Naive thymus-derived CD4-positive, alpha-beta T cell (primary cell): ENCODE measurements at regions of chr20 and their contacts with region 1.

Region 1: DNA sequence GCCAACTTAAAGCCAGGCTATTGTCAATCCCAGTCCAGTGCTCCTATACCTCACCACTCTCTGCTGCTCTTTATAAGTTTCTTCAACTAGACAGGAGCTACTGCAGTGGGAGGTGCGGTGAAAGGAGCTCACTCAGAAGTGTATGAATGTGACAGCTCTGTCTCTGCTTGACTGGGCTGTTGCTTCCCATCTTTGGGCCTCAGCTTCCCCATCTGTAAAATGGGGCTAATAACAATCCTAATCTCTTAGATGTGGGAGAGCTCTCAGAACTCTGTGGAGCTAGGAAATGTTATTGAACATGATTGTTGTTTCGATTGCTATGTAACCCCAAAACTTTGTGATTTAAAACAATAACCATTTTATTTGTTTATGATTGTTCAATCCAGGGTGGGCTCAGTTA is 8.4 kb upstream of the RALY start:
- DNase-seq: no peak
- ATAC-seq: no peak
- H3K4me3 ChIP-seq: no peak overlapping the region
- H3K4me3 Mint-ChIP-seq: no peak overlapping the region
- H3K27ac ChIP-seq: no peak overlapping the region
- H3K27ac Mint-ChIP-seq: no peak overlapping the region
- H3K4me1 ChIP-seq: no peaks in the 10 kb centered on the region
- H3K4me1 Mint-ChIP-seq: peaks cover 0 to 13% (median 5%) of the 10 kb centered on the region in 7 donors
- H3K27me3 ChIP-seq: no peaks in the 10 kb centered on the region
- H3K27me3 Mint-ChIP-seq: peaks cover 0 to 6% (median 4%) of the 10 kb centered on the region in 5 donors

Region 2: DNA sequence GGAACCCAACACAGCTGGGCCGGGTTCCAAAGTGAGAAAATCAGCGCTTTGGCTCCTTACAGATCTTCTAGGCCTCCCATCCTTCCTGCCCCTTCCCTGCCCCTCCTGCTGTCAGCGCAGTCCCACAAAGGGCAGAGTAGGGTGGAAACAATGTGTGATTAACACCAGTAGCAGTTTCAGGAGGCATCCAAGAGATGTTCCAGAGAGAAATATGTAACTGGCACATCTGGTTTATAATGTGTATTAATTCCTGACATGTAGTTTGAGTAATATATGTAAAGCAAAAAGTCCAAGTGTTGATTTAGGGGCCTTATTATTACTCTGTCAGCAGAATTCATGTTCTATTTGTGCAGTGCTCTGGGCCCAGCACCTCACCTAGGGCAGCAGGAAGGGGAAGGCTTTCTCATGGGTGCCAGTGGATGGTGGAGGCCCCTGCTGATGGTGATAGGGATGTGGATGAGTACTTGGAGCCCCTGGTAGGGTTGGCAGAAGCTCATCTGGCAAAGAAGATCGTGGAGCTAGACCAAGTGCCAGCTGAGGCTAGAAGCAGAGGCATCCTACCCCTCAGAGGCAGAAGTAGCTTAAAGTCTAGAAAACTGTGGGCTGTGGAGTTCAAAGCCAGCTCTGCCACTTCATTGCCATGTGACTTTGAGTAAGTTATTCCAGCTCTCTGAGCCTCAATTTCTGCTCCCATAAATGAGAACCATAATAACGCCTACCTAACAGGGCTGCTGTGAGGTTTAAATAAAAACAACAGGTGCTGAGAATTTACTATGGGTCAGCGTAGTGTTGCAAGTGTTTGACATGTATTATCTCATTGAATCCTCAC is 13.9 kb before region 1 on chr20:
- CTCF ChIA-PET with region 1: interaction called, 4 read pairs
- POLR2A ChIA-PET with region 1: no interaction called
- intact Hi-C with region 1: loop called in 1 of 2 experiments (anchors 1 kb)
- DNase-seq: no peak
- ATAC-seq: no peak
- H3K4me3 ChIP-seq: no peak overlapping the region
- H3K4me3 Mint-ChIP-seq: no peak overlapping the region
- H3K27ac ChIP-seq: no peak overlapping the region
- H3K27ac Mint-ChIP-seq: peak overlapping the region in 2 of 9 donors; percentile 17 to 23
- H3K4me1 ChIP-seq: no peaks in the 10 kb centered on the region
- H3K4me1 Mint-ChIP-seq: peaks cover 0 to 5% (median 0%) of the 10 kb centered on the region in 7 donors
- H3K27me3 ChIP-seq: no peaks in the 10 kb centered on the region
- H3K27me3 Mint-ChIP-seq: peaks cover 0 to 2% (median 0%) of the 10 kb centered on the region in 5 donors

Region 3: DNA sequence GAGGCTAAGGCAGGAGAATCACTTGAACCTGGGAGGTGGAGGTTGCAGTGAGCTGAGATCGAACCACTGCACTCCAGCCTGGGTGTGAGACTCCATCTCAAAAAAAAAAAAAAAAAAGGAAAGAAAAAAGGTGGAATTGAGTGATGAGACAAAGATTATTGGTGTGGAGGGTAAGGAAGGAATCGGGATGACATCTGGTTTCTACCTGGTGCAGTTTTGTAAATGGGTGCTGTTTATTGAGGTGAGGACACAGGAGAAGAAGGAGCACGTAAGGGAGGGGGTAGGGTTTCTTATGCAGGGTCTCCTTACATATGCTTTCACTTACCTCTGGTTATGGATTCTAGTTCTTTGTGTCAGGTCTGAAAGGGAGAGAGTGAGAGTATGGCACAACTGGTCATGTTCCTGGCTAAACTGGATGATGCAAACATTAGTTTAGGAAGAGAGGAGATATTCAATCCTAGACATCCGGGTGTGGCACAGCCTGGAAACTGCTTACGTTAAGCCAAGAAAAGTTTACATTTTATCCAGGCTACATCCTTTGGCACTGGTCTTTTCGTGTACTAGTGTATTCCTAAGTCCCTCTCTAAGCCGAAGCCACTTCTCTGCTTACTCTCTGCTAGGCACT is 13.9 kb after region 1 on chr20:
- CTCF ChIA-PET with region 1: no interaction called
- POLR2A ChIA-PET with region 1: no interaction called
- intact Hi-C with region 1: no loop called
- DNase-seq: no peak
- ATAC-seq: no peak
- H3K4me3 ChIP-seq: no peak overlapping the region
- H3K4me3 Mint-ChIP-seq: peak overlapping the region in 9 of 10 donors; percentile 25 to 77 (median 60)
- H3K27ac ChIP-seq: no peak overlapping the region
- H3K27ac Mint-ChIP-seq: peak overlapping the region in 5 of 9 donors; percentile 0 to 76 (median 4)
- H3K4me1 ChIP-seq: peaks cover 61 to 67% of the 10 kb centered on the region in 2 donors
- H3K4me1 Mint-ChIP-seq: peaks cover 71 to 96% (median 85%) of the 10 kb centered on the region in 7 donors
- H3K27me3 ChIP-seq: no peaks in the 10 kb centered on the region
- H3K27me3 Mint-ChIP-seq: no peaks in the 10 kb centered on the region